AG04449 (cell line): ENCODE measurements at regions of chr1 and their contacts with region 1.

Region 1: DNA sequence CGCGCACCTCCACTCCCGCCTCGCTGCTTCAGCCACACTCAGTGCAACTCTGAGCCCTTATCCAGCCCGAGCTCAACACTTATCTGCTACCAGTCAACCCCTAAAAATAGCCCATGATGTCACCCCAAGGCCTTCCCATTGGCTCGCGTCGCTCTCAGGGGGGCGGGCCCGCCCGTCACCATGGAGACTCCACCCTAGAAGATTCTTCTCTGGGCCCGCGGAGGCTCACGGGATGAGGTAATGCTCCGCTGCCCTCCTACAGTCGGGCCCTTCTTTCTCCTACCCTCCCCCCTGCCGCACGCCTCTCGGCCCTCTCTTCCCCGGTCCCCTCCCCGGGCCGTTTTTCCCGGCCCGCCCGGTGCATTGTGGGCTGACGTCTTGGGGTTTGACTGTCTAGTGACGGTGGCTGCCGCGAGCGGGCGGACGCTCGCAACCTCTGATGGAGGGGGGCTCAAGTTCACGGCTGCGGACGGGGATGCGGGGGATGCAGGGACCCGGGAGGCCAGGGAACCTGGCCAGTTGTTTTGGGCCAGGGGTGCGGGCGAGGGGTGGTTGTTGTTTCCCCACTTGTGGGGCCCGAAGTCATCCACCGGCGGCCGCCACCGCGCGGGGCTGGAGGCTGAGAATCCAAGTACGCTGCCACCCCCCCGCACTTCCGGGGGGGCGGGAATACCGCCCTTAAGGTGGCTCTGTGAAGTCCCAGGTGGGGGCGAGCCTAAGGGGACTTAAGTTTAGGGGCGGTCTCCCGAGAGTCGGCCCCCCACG is at the start of gene JUN:
- DNase-seq: peak; percentile 98
- H3K4me3 ChIP-seq: peak within 1 kb of the TSS; percentile 95
- CTCF ChIP-seq: no peak

Region 2: GRCh38 chr1:58755468-58755872 is 28.7 kb before region 1 on chr1:
- CTCF ChIA-PET with region 1: no interaction called
- POLR2A ChIA-PET with region 1: interaction called, 15 read pairs
- DNase-seq: peak; percentile 98
- H3K4me3 ChIP-seq: no peak overlapping the region
- CTCF ChIP-seq: no peak

Region 3: GRCh38 chr1:58848818-58849411 is 64.7 kb after region 1 on chr1:
- CTCF ChIA-PET with region 1: interaction called, 3 read pairs
- POLR2A ChIA-PET with region 1: interaction called, 13 read pairs
- DNase-seq: peak; percentile 92
- H3K4me3 ChIP-seq: no peak overlapping the region; the same call in 1 of the 2 replicates
- CTCF ChIP-seq: peak; percentile 36

Region 4: DNA sequence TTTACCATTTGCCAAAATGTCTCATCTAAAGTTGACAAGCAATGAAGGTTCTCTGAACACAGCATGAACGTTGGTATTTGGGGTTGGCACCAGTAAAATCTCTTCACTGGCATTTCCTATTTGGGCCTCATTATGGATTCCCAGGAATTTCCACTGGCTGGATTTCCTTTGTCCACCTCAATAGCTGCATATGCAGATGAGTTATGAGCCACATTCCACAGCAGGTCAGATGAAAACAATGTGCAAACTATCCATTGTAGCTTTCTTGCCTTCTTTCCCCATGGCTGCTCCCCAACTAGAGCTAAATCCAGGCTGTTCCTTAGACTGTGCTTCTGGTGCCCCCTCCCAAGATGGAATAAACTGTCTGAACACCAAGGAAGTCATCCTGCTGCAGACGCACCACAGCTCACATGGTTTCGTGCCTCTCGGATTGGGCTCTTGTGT is 344.6 kb after region 1 on chr1:
- CTCF ChIA-PET with region 1: no interaction called
- POLR2A ChIA-PET with region 1: interaction called, 11 read pairs
- DNase-seq: peak; percentile 34
- H3K4me3 ChIP-seq: no peak overlapping the region
- CTCF ChIP-seq: no peak

Region 5: GRCh38 chr1:59699227-59699847 is 915.2 kb after region 1 on chr1:
- CTCF ChIA-PET with region 1: interaction called, 11 read pairs
- POLR2A ChIA-PET with region 1: no interaction called
- DNase-seq: no peak
- H3K4me3 ChIP-seq: no peak overlapping the region
- CTCF ChIP-seq: peak; percentile 75